Right ventricle myocardium superior (tissue), 1 donor: ENCODE measurements at regions of chr17 and their contacts with region 1.

Region 1: GRCh38 chr17:57114085-57114673 is 29.1 kb downstream of the AKAP1 start:
- DNase-seq: peak; percentile 62
- ATAC-seq: no peak

Region 2: GRCh38 chr17:57009737-57010445 is 104.3 kb before region 1 on chr17:
- intact Hi-C with region 1: loop called (anchors 5 kb)
- DNase-seq: no peak
- ATAC-seq: peak; percentile 71

Region 3: GRCh38 chr17:57195785-57196460 is 81.7 kb after region 1 on chr17:
- intact Hi-C with region 1: no loop called
- DNase-seq: no peak
- ATAC-seq: no peak